ENCODE measurements at regions of chr15 and their contacts with region 1.

Region 1: DNA sequence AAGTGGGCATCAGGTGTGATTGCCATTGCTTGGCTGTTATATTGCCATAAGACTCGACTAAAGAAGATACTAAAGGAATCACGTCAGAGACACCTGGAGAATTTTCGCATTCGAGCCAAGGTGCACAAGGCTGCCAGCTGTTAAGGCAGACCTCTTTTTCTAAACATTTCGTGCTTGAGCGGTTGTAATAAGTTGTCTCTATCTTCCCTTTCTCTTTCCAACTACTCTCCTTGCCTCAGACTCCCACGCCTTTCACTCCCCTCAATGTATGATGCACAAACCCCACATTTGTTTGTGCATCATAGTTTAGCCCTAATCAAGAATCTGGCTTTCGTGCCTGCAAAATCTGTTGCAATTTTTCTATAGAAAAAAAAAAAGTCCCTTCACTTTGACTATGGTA is 118.0 kb downstream of the IQCH start:
- DNase-seq: no peak
- H3K4me3 ChIP-seq: no peak overlapping the region
- H3K27ac ChIP-seq: no peak overlapping the region
- H3K4me1 ChIP-seq: no peaks in the 10 kb centered on the region
- H3K27me3 ChIP-seq: no peaks in the 10 kb centered on the region
- CTCF ChIP-seq: no peak
- POLR2A ChIP-seq: no peak

Region 2: DNA sequence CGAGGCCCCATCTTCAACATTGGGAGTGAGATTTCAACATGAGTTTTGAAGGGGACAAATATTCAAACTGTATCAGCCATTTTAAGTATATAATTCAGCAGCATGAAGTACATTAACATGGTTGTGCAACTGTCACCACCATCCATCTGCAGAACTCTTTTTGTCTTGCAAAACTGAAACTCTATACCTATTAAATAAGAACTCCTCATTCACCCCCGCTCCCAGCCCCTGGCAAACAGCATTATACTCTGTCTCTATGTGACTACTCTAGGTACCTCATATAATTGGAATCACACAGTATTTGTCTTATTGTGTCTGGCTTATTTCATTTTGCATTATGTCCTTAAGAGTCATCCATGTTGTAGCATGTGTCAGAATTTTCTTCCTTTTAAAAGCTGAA is 280.0 kb after region 1 on chr15:
- intact Hi-C with region 1: loop called (anchors 10 kb)
- DNase-seq: no peak
- H3K4me3 ChIP-seq: no peak overlapping the region
- H3K27ac ChIP-seq: no peak overlapping the region
- H3K4me1 ChIP-seq: no peaks in the 10 kb centered on the region
- H3K27me3 ChIP-seq: no peaks in the 10 kb centered on the region
- CTCF ChIP-seq: no peak
- POLR2A ChIP-seq: no peak

Region 3: GRCh38 chr15:69357773-69358771 is 1985.5 kb after region 1 on chr15:
- intact Hi-C with region 1: no loop called
- DNase-seq: no peak
- H3K4me3 ChIP-seq: no peak overlapping the region
- H3K27ac ChIP-seq: no peak overlapping the region
- H3K4me1 ChIP-seq: no peaks in the 10 kb centered on the region
- H3K27me3 ChIP-seq: no peaks in the 10 kb centered on the region
- CTCF ChIP-seq: no peak
- POLR2A ChIP-seq: no peak

Measured in breast epithelium (tissue), 4 donors.